GM12878 (cell line): ENCODE measurements at regions of chr17 and their contacts with region 1.

Region 1: GRCh38 chr17:1331708-1332107 is 52.2 kb downstream of the TRARG1 start:
- DNase-seq: no peak
- ATAC-seq: no peak
- H3K4me3 ChIP-seq: no peak overlapping the region
- H3K27ac ChIP-seq: no peak overlapping the region
- H3K4me1 ChIP-seq: no peaks in the 10 kb centered on the region
- H3K27me3 ChIP-seq: no peaks in the 10 kb centered on the region; a peak in 1 of 4 replicates
- CTCF ChIP-seq: no peak
- EP300 ChIP-seq: no peak
- POLR2A ChIP-seq: no peak
- RAD21 ChIP-seq: no peak

Region 2: GRCh38 chr17:835263-835662 is 496.4 kb before region 1 on chr17:
- CTCF ChIA-PET with region 1: no interaction called
- POLR2A ChIA-PET with region 1: no interaction called
- RAD21 ChIA-PET with region 1: no interaction called
- SMC1A ChIA-PET with region 1: no interaction called
- in situ Hi-C with region 1: no loop called
- intact Hi-C with region 1: no loop called
- DNase-seq: no peak
- ATAC-seq: no peak
- H3K4me3 ChIP-seq: no peak overlapping the region
- H3K27ac ChIP-seq: no peak overlapping the region
- H3K4me1 ChIP-seq: no peaks in the 10 kb centered on the region
- H3K27me3 ChIP-seq: no peaks in the 10 kb centered on the region
- CTCF ChIP-seq: no peak
- EP300 ChIP-seq: no peak
- POLR2A ChIP-seq: no peak
- RAD21 ChIP-seq: no peak

Region 3: DNA sequence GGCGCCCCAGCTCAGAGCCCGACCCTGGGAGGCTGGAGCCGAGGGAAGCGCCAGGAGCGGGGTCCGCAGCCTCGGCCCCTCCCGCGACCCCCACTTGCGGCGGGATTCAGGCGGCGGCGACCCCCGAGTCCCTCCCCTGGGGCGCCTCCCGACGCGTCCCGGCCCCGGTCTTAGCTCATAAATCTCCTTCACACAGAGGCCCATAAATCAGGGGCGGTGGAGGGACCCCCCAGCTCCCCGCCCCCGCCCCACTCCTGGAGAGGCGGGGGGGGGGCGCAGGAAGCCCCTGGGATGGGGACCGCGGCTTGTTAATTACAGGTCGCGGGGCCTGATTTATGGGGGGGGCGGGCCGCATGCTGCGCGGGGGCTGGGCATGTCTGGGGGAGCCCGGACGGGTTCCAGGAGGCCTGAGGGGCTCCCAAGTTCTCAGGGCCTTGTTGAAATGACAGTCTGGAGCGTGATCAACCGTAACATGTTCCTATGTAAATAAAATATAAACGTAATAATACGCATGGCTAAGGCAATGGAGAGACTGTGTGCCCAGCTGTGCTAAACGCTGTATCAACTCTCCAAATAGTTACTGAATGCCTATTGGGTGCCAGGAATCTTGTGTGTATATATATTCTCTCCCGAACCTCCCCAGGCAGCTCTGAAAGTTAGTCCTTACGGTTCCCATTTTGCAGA is 71.5 kb before region 1 on chr17:
- CTCF ChIA-PET with region 1: interaction called, 13 read pairs
- POLR2A ChIA-PET with region 1: no interaction called
- RAD21 ChIA-PET with region 1: interaction called, 6 read pairs
- SMC1A ChIA-PET with region 1: interaction called, 3 read pairs
- in situ Hi-C with region 1: no loop called
- intact Hi-C with region 1: loop called (anchors 2 kb)
- DNase-seq: no peak
- ATAC-seq: no peak
- H3K4me3 ChIP-seq: no peak overlapping the region
- H3K27ac ChIP-seq: no peak overlapping the region
- H3K4me1 ChIP-seq: peaks cover 5% of the 10 kb centered on the region
- H3K27me3 ChIP-seq: peaks cover 2 to 4% of the 10 kb centered on the region in 2 experiments
- CTCF ChIP-seq: no peak
- EP300 ChIP-seq: no peak
- POLR2A ChIP-seq: no peak
- RAD21 ChIP-seq: no peak

Region 4: DNA sequence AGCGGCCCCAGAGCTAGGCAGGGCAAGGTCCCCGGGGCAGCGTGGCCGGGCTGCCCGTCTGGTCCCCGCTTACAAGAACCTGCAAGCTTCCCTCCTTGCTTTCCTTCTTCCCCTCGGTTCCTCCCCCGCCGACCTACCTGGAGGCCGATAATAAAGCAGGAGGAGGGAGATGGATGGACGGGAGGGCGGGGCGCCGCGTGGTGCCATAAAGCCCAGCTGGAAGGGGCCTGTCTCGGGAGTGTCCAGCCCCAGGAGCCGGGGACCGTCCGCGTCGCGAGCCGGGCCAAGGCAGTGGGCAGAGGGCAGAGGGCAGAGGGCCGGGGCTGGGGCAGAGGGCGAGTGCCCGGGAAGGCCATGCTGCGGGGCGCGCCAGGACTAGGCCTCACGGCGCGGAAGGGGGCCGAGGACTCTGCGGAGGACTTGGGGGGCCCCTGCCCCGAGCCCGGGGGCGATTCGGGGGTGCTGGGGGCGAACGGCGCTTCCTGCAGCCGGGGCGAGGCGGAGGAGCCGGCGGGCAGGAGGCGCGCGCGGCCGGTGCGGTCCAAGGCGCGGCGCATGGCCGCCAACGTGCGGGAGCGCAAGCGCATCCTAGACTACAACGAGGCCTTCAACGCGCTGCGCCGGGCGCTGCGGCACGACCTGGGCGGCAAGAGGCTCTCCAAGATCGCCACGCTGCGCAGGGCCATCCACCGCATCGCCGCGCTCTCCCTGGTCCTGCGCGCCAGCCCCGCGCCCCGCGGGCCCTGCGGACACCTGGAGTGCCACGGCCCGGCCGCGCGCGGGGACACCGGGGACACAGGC is 61.3 kb before region 1 on chr17 and contains the start of gene BHLHA9:
- CTCF ChIA-PET with region 1: interaction called, 7 read pairs
- POLR2A ChIA-PET with region 1: no interaction called
- RAD21 ChIA-PET with region 1: interaction called, 4 read pairs
- SMC1A ChIA-PET with region 1: interaction called, 4 read pairs
- in situ Hi-C with region 1: loop called (anchors 5 kb)
- intact Hi-C with region 1: no loop called
- DNase-seq: no peak
- ATAC-seq: no peak
- H3K4me3 ChIP-seq: no peak within 1 kb of the TSS
- H3K27ac ChIP-seq: no peak within 1 kb of the TSS
- H3K4me1 ChIP-seq: peaks cover 4% of the 10 kb centered on the region
- H3K27me3 ChIP-seq: no peaks in the 10 kb centered on the region; a peak in 1 of 4 replicates
- CTCF ChIP-seq: no peak
- EP300 ChIP-seq: no peak
- POLR2A ChIP-seq: no peak
- RAD21 ChIP-seq: no peak
- polyA plus RNA-seq, gene BHLHA9: not detected

Region 5: GRCh38 chr17:1275962-1276736 is 55.6 kb before region 1 on chr17:
- CTCF ChIA-PET with region 1: interaction called, 7 read pairs
- POLR2A ChIA-PET with region 1: no interaction called
- RAD21 ChIA-PET with region 1: interaction called, 3 read pairs
- SMC1A ChIA-PET with region 1: interaction called, 4 read pairs
- in situ Hi-C with region 1: loop called (anchors 5 kb)
- intact Hi-C with region 1: loop called (anchors 1 kb)
- DNase-seq: no peak
- ATAC-seq: peak; percentile 95
- H3K4me3 ChIP-seq: no peak overlapping the region
- H3K27ac ChIP-seq: no peak overlapping the region
- H3K4me1 ChIP-seq: no peaks in the 10 kb centered on the region
- H3K27me3 ChIP-seq: no peaks in the 10 kb centered on the region; a peak in 1 of 4 replicates
- CTCF ChIP-seq: peak; percentile 68 to 92 (median 86)
- EP300 ChIP-seq: no peak
- POLR2A ChIP-seq: no peak
- RAD21 ChIP-seq: peak; percentile 88

Region 6: GRCh38 chr17:1351971-1352370 is 20.3 kb after region 1 on chr17:
- CTCF ChIA-PET with region 1: no interaction called
- POLR2A ChIA-PET with region 1: no interaction called
- RAD21 ChIA-PET with region 1: no interaction called
- SMC1A ChIA-PET with region 1: no interaction called
- in situ Hi-C with region 1: no loop called
- intact Hi-C with region 1: no loop called
- DNase-seq: no peak
- ATAC-seq: no peak
- H3K4me3 ChIP-seq: no peak overlapping the region
- H3K27ac ChIP-seq: no peak overlapping the region
- H3K4me1 ChIP-seq: no peaks in the 10 kb centered on the region
- H3K27me3 ChIP-seq: no peaks in the 10 kb centered on the region
- CTCF ChIP-seq: no peak
- EP300 ChIP-seq: no peak
- POLR2A ChIP-seq: no peak
- RAD21 ChIP-seq: no peak